ENCODE measurements at regions of chr11 and their contacts with region 1.

Region 1: GRCh38 chr11:95067039-95067840 is 521 bp downstream of the SRSF8 start:
- DNase-seq: peak; percentile 66 to 83
- ATAC-seq: peak; percentile 67
- H3K4me3 ChIP-seq: peak overlapping the region; percentile 51 to 93 (median 76)
- H3K27ac ChIP-seq: peak overlapping the region; percentile 89 to 98 (median 94)
- H3K4me1 ChIP-seq: peaks cover 19 to 27% of the 10 kb centered on the region in 2 donors
- H3K27me3 ChIP-seq: no peaks in the 10 kb centered on the region
- CTCF ChIP-seq: peak; percentile 39 to 79 (median 62)
- POLR2A ChIP-seq: peak; percentile 43 to 65

Region 2: DNA sequence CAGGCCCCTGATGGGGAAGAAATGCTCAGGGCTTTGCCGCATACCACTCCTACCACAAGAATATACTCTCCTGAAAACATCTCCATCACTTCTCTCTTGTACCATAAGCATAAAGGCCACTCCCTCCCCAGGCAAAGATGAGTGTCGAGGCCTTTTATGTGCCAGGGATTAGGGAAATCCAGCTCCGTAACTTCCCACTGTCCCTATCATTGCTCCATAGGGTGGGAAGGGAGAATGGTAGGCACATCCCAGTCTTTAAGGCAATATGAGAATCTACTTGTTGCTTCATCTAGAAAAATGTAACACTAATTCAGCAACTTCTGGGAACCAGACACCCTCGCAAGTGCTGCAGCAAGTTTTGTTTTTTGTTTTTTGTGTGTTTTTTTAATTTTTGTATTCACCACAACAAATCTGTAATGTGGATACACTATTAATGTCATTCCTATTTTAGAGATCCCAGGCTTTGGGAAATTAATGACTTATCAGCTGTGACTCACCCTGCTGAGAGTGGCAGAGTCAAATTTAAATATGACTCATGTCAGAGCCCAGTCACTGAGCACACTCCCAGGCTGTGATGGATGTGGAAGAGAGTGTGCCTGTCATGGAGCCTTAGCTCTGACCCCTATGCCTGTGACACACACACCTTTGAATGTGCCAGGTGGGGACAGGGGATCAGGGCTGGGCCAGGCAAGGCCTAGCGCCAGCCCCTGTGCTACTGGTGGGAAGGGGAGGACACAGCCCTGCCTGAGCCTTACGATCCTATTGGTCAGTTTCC is 915.1 kb before region 1 on chr11:
- in situ Hi-C with region 1: no loop called
- intact Hi-C with region 1: loop called (anchors 10 kb)
- DNase-seq: peak; percentile 23 to 78
- ATAC-seq: peak; percentile 97 to 98
- H3K4me3 ChIP-seq: no peak overlapping the region
- H3K27ac ChIP-seq: peak overlapping the region; percentile 76 to 84 (median 80)
- H3K4me1 ChIP-seq: peaks cover 19 to 28% of the 10 kb centered on the region in 2 donors
- H3K27me3 ChIP-seq: no peaks in the 10 kb centered on the region
- CTCF ChIP-seq: no peak
- POLR2A ChIP-seq: no peak

Region 3: DNA sequence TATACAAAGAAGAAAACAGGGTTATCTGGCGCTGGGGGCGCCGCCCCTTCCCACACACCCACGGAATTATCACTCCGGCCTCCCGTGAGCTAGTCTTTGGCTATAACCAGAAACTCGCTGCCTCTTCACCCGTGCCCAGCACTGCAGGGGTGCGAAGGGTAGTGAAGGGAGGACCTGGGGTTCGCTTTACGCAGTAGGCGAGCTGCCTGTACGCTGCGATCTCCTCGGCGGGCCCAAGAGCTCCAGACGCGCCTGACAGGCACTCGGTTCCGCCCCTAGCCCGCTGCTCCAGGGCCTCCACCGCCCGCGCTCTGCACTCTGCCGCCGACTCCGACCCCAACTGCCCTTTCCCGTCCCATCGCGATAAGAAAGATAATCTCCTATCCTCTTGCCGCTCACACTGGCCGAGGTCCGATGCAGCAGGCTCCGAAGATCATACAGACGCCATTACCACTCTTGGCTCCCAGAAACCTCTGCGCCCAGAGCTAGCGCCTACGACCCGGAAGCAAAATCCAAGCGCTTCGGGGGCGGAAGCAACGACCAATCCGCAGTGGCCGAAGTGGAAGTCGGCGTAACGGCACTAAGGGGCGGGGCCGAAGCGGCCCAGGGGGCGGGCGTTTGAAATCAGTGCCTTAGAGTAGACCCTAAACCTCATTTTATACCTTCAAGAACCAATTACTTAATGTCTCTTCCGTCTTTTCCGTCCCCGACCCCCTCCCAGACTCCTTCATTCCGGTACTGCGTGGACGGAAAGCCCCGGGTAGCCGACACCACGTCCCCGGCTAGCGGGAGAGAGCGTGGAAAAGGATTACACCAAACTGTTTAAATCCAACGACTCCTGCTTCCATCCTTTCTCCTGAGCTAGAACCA is 93.9 kb before region 1 on chr11 and contains the starts of genes CWC15 and KDM4D:
- in situ Hi-C with region 1: loop called in 2 of 4 experiments (anchors 10 kb)
- intact Hi-C with region 1: loop called (anchors 5 kb)
- DNase-seq: peak; percentile 92 to 93
- ATAC-seq: peak; percentile 100
- H3K4me3 ChIP-seq: peak within 1 kb of the TSS; percentile 82 to 97 (median 90)
- H3K27ac ChIP-seq: peak within 1 kb of the TSS; percentile 78 to 88 (median 80)
- H3K4me1 ChIP-seq: peaks cover 14 to 17% of the 10 kb centered on the region in 2 donors
- H3K27me3 ChIP-seq: no peaks in the 10 kb centered on the region
- CTCF ChIP-seq: no peak
- POLR2A ChIP-seq: peak; percentile 40 to 56
- total RNA-seq, gene CWC15: 53.9 to 69.5 (median 60.5) TPM
- total RNA-seq, gene KDM4D: 0.12 to 1.5 (median 0.56) TPM

Region 4: GRCh38 chr11:95108159-95108611 is 40.9 kb after region 1 on chr11:
- in situ Hi-C with region 1: no loop called
- intact Hi-C with region 1: loop called (anchors 1 kb)
- DNase-seq: peak; percentile 66 to 80
- ATAC-seq: peak; percentile 63 to 78
- H3K4me3 ChIP-seq: peak overlapping the region; percentile 48 to 53 (median 52)
- H3K27ac ChIP-seq: peak overlapping the region; percentile 85 to 94 (median 90)
- H3K4me1 ChIP-seq: peaks cover 81 to 96% of the 10 kb centered on the region in 2 donors
- H3K27me3 ChIP-seq: no peaks in the 10 kb centered on the region
- CTCF ChIP-seq: no peak
- POLR2A ChIP-seq: peak; percentile 2 to 29

Region 5: GRCh38 chr11:95150946-95151684 is 83.9 kb after region 1 on chr11:
- in situ Hi-C with region 1: loop called in 1 of 4 experiments (anchors 5 kb)
- intact Hi-C with region 1: loop called (anchors 1 kb)
- DNase-seq: peak; percentile 85 to 86
- ATAC-seq: peak; percentile 84 to 86
- H3K4me3 ChIP-seq: peak overlapping the region; percentile 63 to 73 (median 72)
- H3K27ac ChIP-seq: peak overlapping the region; percentile 80 to 89 (median 84)
- H3K4me1 ChIP-seq: peaks cover 30 to 31% of the 10 kb centered on the region in 2 donors
- H3K27me3 ChIP-seq: no peaks in the 10 kb centered on the region
- CTCF ChIP-seq: peak; percentile 80 to 93 (median 83)
- POLR2A ChIP-seq: peak; percentile 49 to 60

Region 6: GRCh38 chr11:95705485-95706124 is 638.4 kb after region 1 on chr11:
- in situ Hi-C with region 1: loop called in 1 of 4 experiments (anchors 10 kb)
- intact Hi-C with region 1: loop called (anchors 2 kb)
- DNase-seq: peak; percentile 71 to 75
- ATAC-seq: peak; percentile 95 to 97
- H3K4me3 ChIP-seq: peak overlapping the region in 1 of 4 donors; percentile 12
- H3K27ac ChIP-seq: peak overlapping the region; percentile 29 to 65 (median 48)
- H3K4me1 ChIP-seq: peaks cover 0 to 8% of the 10 kb centered on the region in 2 donors
- H3K27me3 ChIP-seq: no peaks in the 10 kb centered on the region
- CTCF ChIP-seq: peak; percentile 81 to 91 (median 82)
- POLR2A ChIP-seq: no peak

Region 7: GRCh38 chr11:95790123-95790932 is 723.1 kb after region 1 on chr11 and contains the start of gene CEP57:
- in situ Hi-C with region 1: no loop called
- intact Hi-C with region 1: loop called (anchors 1 kb)
- DNase-seq: peak; percentile 93 to 96
- ATAC-seq: peak; percentile 89 to 92
- H3K4me3 ChIP-seq: peak within 1 kb of the TSS; percentile 88 to 99 (median 96)
- H3K27ac ChIP-seq: peak within 1 kb of the TSS; percentile 95 to 98 (median 96)
- H3K4me1 ChIP-seq: peaks cover 19 to 26% of the 10 kb centered on the region in 2 donors
- H3K27me3 ChIP-seq: no peaks in the 10 kb centered on the region
- CTCF ChIP-seq: no peak
- POLR2A ChIP-seq: peak; percentile 50 to 59
- total RNA-seq, gene CEP57: 10.2 to 20.5 (median 16.9) TPM

Measured in gastrocnemius medialis (tissue), 4 donors.